Naive thymus-derived CD4-positive, alpha-beta T cell (primary cell): ENCODE measurements at regions of chr22 and their contacts with region 1.

Region 1: DNA sequence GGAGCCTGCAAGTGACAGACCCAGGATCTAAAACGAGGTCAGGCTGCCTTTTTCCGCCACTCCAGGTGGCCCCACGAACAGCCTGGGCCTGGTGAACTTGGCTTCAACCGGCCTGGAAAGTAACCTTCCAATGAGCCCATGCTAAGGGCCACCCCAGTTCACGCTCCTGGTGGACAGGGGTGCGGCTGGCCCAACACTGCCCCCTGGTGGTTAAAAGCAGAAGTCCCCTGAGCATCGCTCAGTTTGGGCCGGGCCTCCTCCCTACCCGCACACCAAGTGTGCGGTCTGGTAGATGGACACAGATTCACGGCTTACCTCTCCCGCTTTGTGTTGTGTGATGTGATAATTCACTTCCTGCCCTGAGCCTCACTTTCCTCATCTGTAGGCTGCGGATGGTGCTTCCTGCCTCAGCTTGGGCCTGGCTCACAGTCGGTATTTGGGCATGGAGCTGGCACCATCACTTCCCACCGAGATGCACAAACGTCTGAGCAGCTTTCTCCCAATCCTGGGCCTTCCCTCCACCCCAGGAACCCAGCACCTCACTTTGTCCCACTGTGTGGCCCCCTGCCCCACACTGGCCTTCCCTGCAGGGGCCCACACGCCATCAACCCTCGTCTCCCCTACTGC is 13.7 kb upstream of the SEC14L3 start:
- DNase-seq: peak; percentile 61 to 84 (median 70)
- ATAC-seq: peak; percentile 98
- H3K4me3 ChIP-seq: no peak overlapping the region
- H3K4me3 Mint-ChIP-seq: no peak overlapping the region
- H3K27ac ChIP-seq: no peak overlapping the region
- H3K27ac Mint-ChIP-seq: peak overlapping the region in 3 of 9 donors; percentile 2 to 45 (median 9)
- H3K4me1 ChIP-seq: no peaks in the 10 kb centered on the region
- H3K4me1 Mint-ChIP-seq: peaks cover 0 to 2% (median 0%) of the 10 kb centered on the region in 7 donors
- H3K27me3 ChIP-seq: no peaks in the 10 kb centered on the region
- H3K27me3 Mint-ChIP-seq: peaks cover 0 to 4% (median 0%) of the 10 kb centered on the region in 5 donors

Region 2: GRCh38 chr22:30396871-30397655 is 88.4 kb before region 1 on chr22 and contains the start of gene SEC14L2:
- CTCF ChIA-PET with region 1: interaction called, 57 read pairs
- POLR2A ChIA-PET with region 1: interaction called, 8 read pairs
- intact Hi-C with region 1: no loop called
- DNase-seq: peak; percentile 26 to 73 (median 50)
- ATAC-seq: peak; percentile 81
- H3K4me3 ChIP-seq: peak within 1 kb of the TSS; percentile 71
- H3K4me3 Mint-ChIP-seq: peak within 1 kb of the TSS; percentile 85 to 95 (median 90)
- H3K27ac ChIP-seq: peak within 1 kb of the TSS; percentile 77
- H3K27ac Mint-ChIP-seq: peak within 1 kb of the TSS; percentile 77 to 94 (median 91)
- H3K4me1 ChIP-seq: peaks cover 12 to 22% of the 10 kb centered on the region in 2 donors
- H3K4me1 Mint-ChIP-seq: peaks cover 29 to 69% (median 46%) of the 10 kb centered on the region in 7 donors
- H3K27me3 ChIP-seq: no peaks in the 10 kb centered on the region
- H3K27me3 Mint-ChIP-seq: peaks cover 0 to 5% (median 0%) of the 10 kb centered on the region in 5 donors
- total RNA-seq, gene SEC14L2: 10.7 to 147 (median 16.5) TPM

Region 3: GRCh38 chr22:30435674-30436126 is 49.8 kb before region 1 on chr22:
- CTCF ChIA-PET with region 1: interaction called, 3 read pairs
- POLR2A ChIA-PET with region 1: no interaction called
- intact Hi-C with region 1: loop called in 1 of 2 experiments (anchors 2 kb)
- DNase-seq: peak; percentile 45 to 97 (median 92)
- ATAC-seq: peak; percentile 94
- H3K4me3 ChIP-seq: peak overlapping the region; percentile 53
- H3K4me3 Mint-ChIP-seq: peak overlapping the region; percentile 57 to 90 (median 83)
- H3K27ac ChIP-seq: peak overlapping the region; percentile 99
- H3K27ac Mint-ChIP-seq: peak overlapping the region; percentile 88 to 100 (median 98)
- H3K4me1 ChIP-seq: peaks cover 16 to 21% of the 10 kb centered on the region in 2 donors
- H3K4me1 Mint-ChIP-seq: peaks cover 10 to 26% (median 23%) of the 10 kb centered on the region in 7 donors
- H3K27me3 ChIP-seq: peaks cover 3 to 6% of the 10 kb centered on the region in 2 donors
- H3K27me3 Mint-ChIP-seq: peaks cover 12 to 24% (median 18%) of the 10 kb centered on the region in 5 donors

Region 4: GRCh38 chr22:30444632-30445437 is 40.6 kb before region 1 on chr22:
- CTCF ChIA-PET with region 1: no interaction called
- POLR2A ChIA-PET with region 1: no interaction called
- intact Hi-C with region 1: loop called (anchors 1 to 2 kb)
- DNase-seq: peak in 4 of 9 donors; percentile 34 to 61 (median 46)
- ATAC-seq: peak; percentile 54
- H3K4me3 ChIP-seq: no peak overlapping the region
- H3K4me3 Mint-ChIP-seq: no peak overlapping the region
- H3K27ac ChIP-seq: no peak overlapping the region
- H3K27ac Mint-ChIP-seq: no peak overlapping the region
- H3K4me1 ChIP-seq: peaks cover 0 to 9% of the 10 kb centered on the region in 2 donors
- H3K4me1 Mint-ChIP-seq: peaks cover 13 to 35% (median 18%) of the 10 kb centered on the region in 7 donors
- H3K27me3 ChIP-seq: no peaks in the 10 kb centered on the region
- H3K27me3 Mint-ChIP-seq: peaks cover 32 to 76% (median 56%) of the 10 kb centered on the region in 5 donors

Region 5: GRCh38 chr22:30523776-30524489 is 38.5 kb after region 1 on chr22:
- CTCF ChIA-PET with region 1: no interaction called
- POLR2A ChIA-PET with region 1: no interaction called
- intact Hi-C with region 1: no loop called
- DNase-seq: no peak
- ATAC-seq: no peak
- H3K4me3 ChIP-seq: no peak overlapping the region
- H3K4me3 Mint-ChIP-seq: no peak overlapping the region
- H3K27ac ChIP-seq: no peak overlapping the region
- H3K27ac Mint-ChIP-seq: no peak overlapping the region
- H3K4me1 ChIP-seq: no peaks in the 10 kb centered on the region
- H3K4me1 Mint-ChIP-seq: peaks cover 0 to 2% (median 0%) of the 10 kb centered on the region in 7 donors
- H3K27me3 ChIP-seq: no peaks in the 10 kb centered on the region
- H3K27me3 Mint-ChIP-seq: peaks cover 0 to 9% (median 3%) of the 10 kb centered on the region in 5 donors

Region 6: GRCh38 chr22:30680991-30681770 is 195.7 kb after region 1 on chr22:
- CTCF ChIA-PET with region 1: no interaction called
- POLR2A ChIA-PET with region 1: no interaction called
- intact Hi-C with region 1: no loop called
- DNase-seq: no peak
- ATAC-seq: no peak
- H3K4me3 ChIP-seq: no peak overlapping the region
- H3K4me3 Mint-ChIP-seq: no peak overlapping the region
- H3K27ac ChIP-seq: no peak overlapping the region
- H3K27ac Mint-ChIP-seq: no peak overlapping the region
- H3K4me1 ChIP-seq: no peaks in the 10 kb centered on the region
- H3K4me1 Mint-ChIP-seq: no peaks in the 10 kb centered on the region
- H3K27me3 ChIP-seq: no peaks in the 10 kb centered on the region
- H3K27me3 Mint-ChIP-seq: peaks cover 0 to 29% (median 6%) of the 10 kb centered on the region in 5 donors